ENCODE measurements at regions of chr11 and their contacts with region 1.

Region 1: GRCh38 chr11:58726737-58727414 is 4.9 kb downstream of the GLYAT start:
- DNase-seq: no peak
- ATAC-seq: no peak
- H3K4me3 ChIP-seq: no peak overlapping the region
- H3K27ac ChIP-seq: no peak overlapping the region
- H3K4me1 ChIP-seq: no peaks in the 10 kb centered on the region
- H3K27me3 ChIP-seq: no peaks in the 10 kb centered on the region
- CTCF ChIP-seq: no peak
- POLR2A ChIP-seq: no peak

Region 2: DNA sequence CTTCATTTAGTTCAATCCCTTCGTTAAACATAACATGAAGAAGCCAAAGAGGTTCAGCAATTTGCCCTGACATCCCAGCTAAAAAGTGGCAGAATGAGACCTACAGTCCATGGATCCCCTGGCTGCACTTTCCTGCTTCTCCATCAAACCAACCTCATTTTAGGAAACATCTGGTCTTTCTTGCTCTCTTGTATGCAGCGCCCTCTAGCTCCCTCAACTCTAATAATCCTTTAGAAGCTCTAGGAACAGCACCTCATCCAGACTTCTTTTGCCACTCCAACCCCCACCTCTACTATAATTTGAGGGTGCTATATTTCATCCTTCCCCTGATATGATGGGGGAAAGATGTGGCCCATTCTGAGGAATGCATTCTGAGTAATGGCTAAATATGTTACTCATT is 97.0 kb before region 1 on chr11:
- in situ Hi-C with region 1: no loop called
- intact Hi-C with region 1: no loop called
- DNase-seq: no peak
- ATAC-seq: peak in 1 of 2 donors; percentile 37
- H3K4me3 ChIP-seq: no peak overlapping the region
- H3K27ac ChIP-seq: no peak overlapping the region
- H3K4me1 ChIP-seq: peaks cover 30 to 42% of the 10 kb centered on the region in 2 donors
- H3K27me3 ChIP-seq: no peaks in the 10 kb centered on the region
- CTCF ChIP-seq: peak in 4 of 5 experiments; percentile 25 to 49 (median 34)
- POLR2A ChIP-seq: no peak

Region 3: DNA sequence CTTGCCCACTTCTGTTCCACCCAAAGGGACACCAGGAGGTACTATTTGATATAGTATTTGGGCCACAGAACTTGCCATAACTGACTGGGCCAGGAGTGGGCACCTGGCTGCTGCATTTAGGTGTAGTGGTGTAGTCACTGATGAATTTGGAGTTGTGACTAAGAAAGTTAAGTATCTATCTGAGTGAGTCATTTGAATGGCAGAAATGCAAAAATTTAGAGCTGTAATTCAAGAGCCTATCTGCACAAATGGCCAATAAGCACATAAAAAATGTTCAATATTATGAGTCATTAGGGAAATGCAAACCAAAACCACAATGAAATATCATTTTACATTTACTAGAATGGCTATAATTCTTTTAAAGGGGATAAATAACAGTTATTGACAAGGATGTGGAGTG is 102.9 kb after region 1 on chr11:
- in situ Hi-C with region 1: loop called in 1 of 4 experiments (anchors 25 kb)
- intact Hi-C with region 1: no loop called
- DNase-seq: no peak
- ATAC-seq: no peak
- H3K4me3 ChIP-seq: no peak overlapping the region
- H3K27ac ChIP-seq: no peak overlapping the region
- H3K4me1 ChIP-seq: no peaks in the 10 kb centered on the region
- H3K27me3 ChIP-seq: no peaks in the 10 kb centered on the region
- CTCF ChIP-seq: no peak
- POLR2A ChIP-seq: no peak

Measured in gastrocnemius medialis (tissue), 4 donors.